ENCODE measurements at regions of chr14 and their contacts with region 1.

Region 1: DNA sequence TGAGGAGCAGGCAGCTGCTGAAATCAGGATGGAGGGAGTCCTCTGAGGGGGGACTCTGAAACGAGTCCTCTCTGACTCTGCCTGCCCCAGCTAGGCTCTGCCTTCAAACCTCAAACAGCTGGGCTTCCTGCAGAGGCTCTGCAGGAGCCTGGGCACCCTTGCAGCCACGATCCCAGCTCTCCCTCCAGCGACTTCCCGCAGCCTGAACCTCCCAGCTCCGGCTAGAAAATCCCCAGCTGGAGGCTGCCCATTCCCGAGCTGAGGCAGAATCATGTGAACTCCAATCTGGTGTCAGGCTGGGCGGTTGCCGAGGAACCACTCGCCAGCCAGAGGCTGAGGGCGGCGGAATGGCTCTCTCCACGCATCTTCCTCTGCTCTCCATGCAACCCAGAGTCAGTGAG is at the start of gene GPR68:
- DNase-seq: peak; percentile 62
- H3K4me3 Mint-ChIP-seq: peak within 1 kb of the TSS; percentile 84
- H3K27ac Mint-ChIP-seq: peak within 1 kb of the TSS; percentile 99
- H3K4me1 Mint-ChIP-seq: peaks cover 96% of the 10 kb centered on the region
- H3K27me3 Mint-ChIP-seq: no peaks in the 10 kb centered on the region

Region 2: DNA sequence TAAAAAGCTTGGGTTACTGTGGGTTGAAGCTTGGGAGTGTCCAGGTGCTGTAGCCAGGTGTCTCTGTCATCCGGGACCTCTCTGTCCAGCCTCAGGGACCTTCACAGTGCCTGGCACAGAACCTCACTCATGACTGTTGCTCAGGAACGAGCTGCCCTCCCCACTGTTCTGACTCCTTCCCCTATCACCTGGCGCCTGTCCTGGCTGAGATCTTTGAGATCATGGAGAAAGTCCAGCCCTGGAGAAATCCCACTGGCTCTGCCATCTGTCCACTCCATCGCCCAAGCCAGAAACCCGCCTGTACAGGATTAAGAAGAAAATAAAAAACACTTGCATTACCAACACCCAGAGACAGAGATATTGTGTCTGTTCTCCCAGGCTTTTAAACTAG is 77.1 kb before region 1 on chr14:
- CTCF ChIA-PET with region 1: no interaction called
- DNase-seq: no peak
- H3K4me3 Mint-ChIP-seq: no peak overlapping the region
- H3K27ac Mint-ChIP-seq: no peak overlapping the region
- H3K4me1 Mint-ChIP-seq: no peaks in the 10 kb centered on the region
- H3K27me3 Mint-ChIP-seq: no peaks in the 10 kb centered on the region

Region 3: GRCh38 chr14:91228112-91229004 is 16.1 kb before region 1 on chr14:
- CTCF ChIA-PET with region 1: interaction called, 47 read pairs
- DNase-seq: peak; percentile 87
- H3K4me3 Mint-ChIP-seq: peak overlapping the region; percentile 21
- H3K27ac Mint-ChIP-seq: peak overlapping the region; percentile 99
- H3K4me1 Mint-ChIP-seq: peaks cover 94% of the 10 kb centered on the region
- H3K27me3 Mint-ChIP-seq: no peaks in the 10 kb centered on the region

Region 4: GRCh38 chr14:91269076-91269991 is 24.8 kb after region 1 on chr14:
- CTCF ChIA-PET with region 1: no interaction called
- DNase-seq: no peak
- H3K4me3 Mint-ChIP-seq: no peak overlapping the region
- H3K27ac Mint-ChIP-seq: peak overlapping the region; percentile 60
- H3K4me1 Mint-ChIP-seq: peaks cover 27% of the 10 kb centered on the region
- H3K27me3 Mint-ChIP-seq: peaks cover 10% of the 10 kb centered on the region

Region 5: DNA sequence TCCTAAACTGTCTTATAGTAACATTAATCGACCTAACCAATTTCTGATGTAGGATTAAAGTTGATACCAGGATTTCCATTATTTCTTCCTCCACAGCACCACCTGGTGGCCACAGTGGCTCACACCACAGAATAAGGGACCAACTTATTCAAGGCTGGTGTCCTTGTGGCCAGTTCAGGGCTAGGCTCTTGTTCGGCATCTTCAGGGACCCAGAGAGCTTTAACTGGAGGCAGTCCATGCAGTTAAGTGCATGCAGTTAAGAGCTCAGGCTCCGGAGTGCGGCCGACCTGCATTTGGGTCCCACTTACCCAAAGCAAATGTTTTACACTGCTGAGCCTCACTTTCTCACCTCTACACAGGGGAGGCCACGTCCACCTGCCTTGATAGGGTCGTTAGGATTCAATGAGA is 42.0 kb after region 1 on chr14:
- CTCF ChIA-PET with region 1: interaction called, 16 read pairs
- DNase-seq: peak; percentile 86
- H3K4me3 Mint-ChIP-seq: no peak overlapping the region
- H3K27ac Mint-ChIP-seq: peak overlapping the region; percentile 4
- H3K4me1 Mint-ChIP-seq: peaks cover 19% of the 10 kb centered on the region
- H3K27me3 Mint-ChIP-seq: no peaks in the 10 kb centered on the region

Region 6: DNA sequence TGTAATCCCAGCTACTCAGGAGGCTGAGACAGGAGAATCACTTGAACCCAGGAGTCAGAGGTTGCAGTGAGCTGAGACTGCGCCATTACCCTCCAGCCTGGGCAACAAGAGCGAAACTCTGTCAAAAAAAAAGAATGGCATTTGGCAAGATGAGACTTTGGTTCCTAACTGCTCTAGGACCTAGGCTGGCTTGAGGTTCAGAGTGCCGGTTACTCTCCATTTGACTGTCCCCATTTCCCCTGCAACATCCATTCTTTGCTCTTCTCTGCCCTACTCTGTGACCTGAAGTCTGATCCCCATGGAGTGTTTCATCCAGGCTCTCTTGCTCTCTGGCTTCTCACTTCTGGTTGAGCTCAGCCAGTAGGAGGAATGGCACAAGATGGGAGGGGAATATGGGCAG is 291.8 kb after region 1 on chr14:
- CTCF ChIA-PET with region 1: no interaction called
- DNase-seq: no peak
- H3K4me3 Mint-ChIP-seq: no peak overlapping the region
- H3K27ac Mint-ChIP-seq: no peak overlapping the region
- H3K4me1 Mint-ChIP-seq: no peaks in the 10 kb centered on the region
- H3K27me3 Mint-ChIP-seq: peaks cover 24% of the 10 kb centered on the region

Region 7: DNA sequence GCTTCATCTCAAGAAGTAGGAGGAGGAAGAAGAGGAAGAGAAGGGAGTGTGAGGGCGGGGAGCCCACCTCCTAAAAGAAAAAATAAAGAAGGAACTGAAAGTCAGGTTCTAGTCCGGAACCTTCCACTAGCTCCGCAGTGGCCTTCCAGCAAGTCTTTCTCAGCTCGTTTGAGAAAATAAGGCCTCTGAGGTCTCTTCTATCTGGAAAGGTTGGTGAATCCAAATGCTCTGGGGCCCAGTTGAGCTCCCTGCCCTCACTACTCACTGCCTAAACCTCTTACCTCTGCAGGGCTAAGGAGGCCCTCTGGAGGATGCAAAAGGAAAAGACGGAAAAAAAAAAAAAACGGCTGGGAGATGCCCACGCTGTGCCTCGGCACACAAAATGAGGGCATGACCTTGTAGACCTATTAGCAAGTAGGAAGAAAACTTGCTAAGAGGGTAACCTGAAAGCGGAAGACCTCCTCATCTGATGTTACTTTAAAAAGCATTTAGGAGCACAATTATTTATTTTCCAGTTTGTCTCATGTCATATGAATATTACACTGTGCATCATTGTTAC is 667.1 kb after region 1 on chr14:
- CTCF ChIA-PET with region 1: no interaction called
- DNase-seq: peak; percentile 57
- H3K4me3 Mint-ChIP-seq: no peak overlapping the region
- H3K27ac Mint-ChIP-seq: no peak overlapping the region
- H3K4me1 Mint-ChIP-seq: peaks cover 15% of the 10 kb centered on the region
- H3K27me3 Mint-ChIP-seq: peaks cover 8% of the 10 kb centered on the region

Measured in activated naive CD4-positive, alpha-beta T cell treated with anti-CD3 and anti-CD28 coated beads, Interleukin-2, amount 10 ng/mL, durations not matched to agents 7 days and 5 days (primary cell).